ENCODE measurements at regions of chr10 and their contacts with region 1.

Region 1: DNA sequence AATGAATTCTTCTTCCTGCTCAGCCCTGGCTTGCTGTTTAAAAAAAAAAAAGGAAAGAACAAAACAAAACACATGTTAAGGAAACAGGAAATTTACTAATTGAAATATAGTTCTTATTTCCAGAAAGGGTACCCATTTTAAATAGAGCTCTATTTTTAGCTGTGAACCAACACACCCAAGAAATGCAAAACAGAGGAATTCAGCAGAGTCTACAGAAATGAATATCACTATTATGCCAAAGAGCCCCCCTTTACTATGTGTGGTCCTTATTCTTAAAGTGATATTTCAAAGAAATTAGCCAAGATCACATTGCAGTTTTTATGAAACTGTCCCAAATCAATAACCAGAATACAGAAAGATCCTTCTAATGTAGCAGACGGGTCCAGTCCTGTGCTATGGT is 53.7 kb downstream of the CCDC6 start:
- DNase-seq: no peak
- ATAC-seq: no peak
- H3K4me3 ChIP-seq: no peak overlapping the region
- H3K4me3 Mint-ChIP-seq: no peak overlapping the region
- H3K27ac ChIP-seq: no peak overlapping the region
- H3K27ac Mint-ChIP-seq: no peak overlapping the region
- H3K4me1 ChIP-seq: no peaks in the 10 kb centered on the region
- H3K4me1 Mint-ChIP-seq: peaks cover 42% of the 10 kb centered on the region
- H3K27me3 ChIP-seq: no peaks in the 10 kb centered on the region
- H3K27me3 Mint-ChIP-seq: no peaks in the 10 kb centered on the region
- CTCF ChIP-seq: no peak

Region 2: GRCh38 chr10:59830601-59831259 is 21.9 kb before region 1 on chr10:
- CTCF ChIA-PET with region 1: no interaction called
- POLR2A ChIA-PET with region 1: interaction called, 3 read pairs
- intact Hi-C with region 1: loop called in 1 of 2 experiments (anchors 2 kb)
- DNase-seq: peak in 3 of 9 experiments; percentile 17 to 45 (median 28)
- ATAC-seq: no peak
- H3K4me3 ChIP-seq: no peak overlapping the region
- H3K4me3 Mint-ChIP-seq: no peak overlapping the region
- H3K27ac ChIP-seq: no peak overlapping the region
- H3K27ac Mint-ChIP-seq: no peak overlapping the region
- H3K4me1 ChIP-seq: no peaks in the 10 kb centered on the region
- H3K4me1 Mint-ChIP-seq: peaks cover 49% of the 10 kb centered on the region
- H3K27me3 ChIP-seq: no peaks in the 10 kb centered on the region
- H3K27me3 Mint-ChIP-seq: no peaks in the 10 kb centered on the region
- CTCF ChIP-seq: peak; percentile 50